GM12878 (cell line): ENCODE measurements at regions of chrX and their contacts with region 1.

Region 1: GRCh38 chrX:17120816-17121215 is 174.4 kb downstream of the REPS2 start:
- DNase-seq: no peak
- ATAC-seq: no peak
- H3K4me3 ChIP-seq: no peak overlapping the region
- H3K27ac ChIP-seq: no peak overlapping the region
- H3K4me1 ChIP-seq: no peaks in the 10 kb centered on the region
- H3K27me3 ChIP-seq: no peaks in the 10 kb centered on the region
- CTCF ChIP-seq: no peak
- EP300 ChIP-seq: no peak
- POLR2A ChIP-seq: no peak
- RAD21 ChIP-seq: no peak

Region 2: GRCh38 chrX:17104433-17104832 is 16.4 kb before region 1 on chrX:
- CTCF ChIA-PET with region 1: interaction called, 10 read pairs
- POLR2A ChIA-PET with region 1: no interaction called
- RAD21 ChIA-PET with region 1: interaction called, 3 read pairs
- SMC1A ChIA-PET with region 1: interaction called, 4 read pairs
- in situ Hi-C with region 1: no loop called
- intact Hi-C with region 1: no loop called
- DNase-seq: no peak
- ATAC-seq: peak; percentile 69
- H3K4me3 ChIP-seq: no peak overlapping the region
- H3K27ac ChIP-seq: no peak overlapping the region
- H3K4me1 ChIP-seq: no peaks in the 10 kb centered on the region
- H3K27me3 ChIP-seq: no peaks in the 10 kb centered on the region; a peak in 1 of 4 replicates
- CTCF ChIP-seq: no peak
- EP300 ChIP-seq: no peak
- POLR2A ChIP-seq: no peak
- RAD21 ChIP-seq: no peak

Region 3: GRCh38 chrX:17361620-17362019 is 240.8 kb after region 1 on chrX:
- CTCF ChIA-PET with region 1: no interaction called
- POLR2A ChIA-PET with region 1: no interaction called
- RAD21 ChIA-PET with region 1: no interaction called
- SMC1A ChIA-PET with region 1: no interaction called
- in situ Hi-C with region 1: no loop called
- intact Hi-C with region 1: no loop called
- DNase-seq: no peak
- ATAC-seq: no peak
- H3K4me3 ChIP-seq: no peak overlapping the region
- H3K27ac ChIP-seq: no peak overlapping the region
- H3K4me1 ChIP-seq: no peaks in the 10 kb centered on the region
- H3K27me3 ChIP-seq: no peaks in the 10 kb centered on the region
- CTCF ChIP-seq: peak; percentile 3 to 18 (median 15); a peak in 2 of 6 replicates
- EP300 ChIP-seq: no peak
- POLR2A ChIP-seq: no peak
- RAD21 ChIP-seq: no peak